MCF 10A (cell line): ENCODE measurements at regions of chr1 and their contacts with region 1.

Region 1: DNA sequence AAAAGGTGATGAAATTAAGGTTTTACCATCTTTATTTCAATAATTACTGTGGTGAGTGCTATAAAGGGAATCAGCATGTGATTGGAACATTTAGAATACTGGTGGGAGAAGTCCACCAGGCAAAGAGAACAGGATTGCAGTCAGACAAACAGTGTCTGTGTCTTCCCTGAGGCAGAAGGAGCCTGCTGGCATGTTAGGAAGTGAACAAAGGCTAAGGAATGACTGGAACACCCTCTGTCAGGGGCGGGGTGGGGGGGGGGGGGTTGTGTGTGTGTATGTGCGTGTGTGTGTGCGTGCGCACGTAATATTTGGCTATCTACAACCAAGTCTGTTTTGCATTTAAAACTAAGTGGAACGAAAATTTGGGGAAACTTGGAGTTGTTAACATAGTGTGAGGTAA is 30.2 kb downstream of the SRRM1 start:
- DNase-seq: no peak
- H3K4me3 Mint-ChIP-seq: no peak overlapping the region
- H3K27ac Mint-ChIP-seq: peak overlapping the region; percentile 70
- H3K4me1 Mint-ChIP-seq: peaks cover 9% of the 10 kb centered on the region
- H3K27me3 Mint-ChIP-seq: no peaks in the 10 kb centered on the region
- CTCF ChIP-seq: no peak

Region 2: GRCh38 chr1:24619376-24619775 is 54.0 kb before region 1 on chr1:
- CTCF ChIA-PET with region 1: no interaction called
- POLR2A ChIA-PET with region 1: no interaction called
- intact Hi-C with region 1: no loop called
- DNase-seq: no peak
- H3K4me3 Mint-ChIP-seq: no peak overlapping the region
- H3K27ac Mint-ChIP-seq: no peak overlapping the region
- H3K4me1 Mint-ChIP-seq: no peaks in the 10 kb centered on the region
- H3K27me3 Mint-ChIP-seq: peaks cover 81% of the 10 kb centered on the region
- CTCF ChIP-seq: no peak

Region 3: DNA sequence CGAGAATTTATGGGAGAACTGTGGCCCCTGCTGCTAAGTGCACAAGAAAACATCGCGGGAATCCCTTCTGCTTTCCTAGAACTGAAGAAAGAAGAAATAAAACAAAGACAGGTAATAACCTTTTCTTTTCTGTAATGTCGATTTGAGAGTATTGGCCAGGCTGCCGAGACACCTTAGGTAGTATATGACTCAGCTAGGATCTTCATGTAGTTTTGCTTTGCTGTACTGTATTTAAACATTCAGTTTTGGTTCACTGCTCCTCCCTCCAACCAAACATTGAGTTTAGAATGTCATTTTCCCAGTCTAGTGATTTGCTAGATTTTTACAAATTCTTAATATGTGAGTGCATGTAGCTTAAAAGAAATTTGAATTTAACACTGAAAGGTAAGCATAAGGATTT is 24.4 kb before region 1 on chr1:
- CTCF ChIA-PET with region 1: interaction called, 3 read pairs
- POLR2A ChIA-PET with region 1: interaction called, 4 read pairs
- intact Hi-C with region 1: loop called (anchors 1 kb)
- DNase-seq: no peak
- H3K4me3 Mint-ChIP-seq: no peak overlapping the region
- H3K27ac Mint-ChIP-seq: no peak overlapping the region
- H3K4me1 Mint-ChIP-seq: peaks cover 15% of the 10 kb centered on the region
- H3K27me3 Mint-ChIP-seq: no peaks in the 10 kb centered on the region
- CTCF ChIP-seq: no peak